ENCODE measurements at regions of chr5 and their contacts with region 1.

Region 1: GRCh38 chr5:87260604-87261192 is 7.0 kb upstream of the RASA1 start:
- DNase-seq: no peak
- H3K4me3 ChIP-seq: no peak overlapping the region
- H3K27ac ChIP-seq: no peak overlapping the region
- H3K4me1 ChIP-seq: no peaks in the 10 kb centered on the region
- H3K27me3 ChIP-seq: no peaks in the 10 kb centered on the region
- CTCF ChIP-seq: no peak

Region 2: DNA sequence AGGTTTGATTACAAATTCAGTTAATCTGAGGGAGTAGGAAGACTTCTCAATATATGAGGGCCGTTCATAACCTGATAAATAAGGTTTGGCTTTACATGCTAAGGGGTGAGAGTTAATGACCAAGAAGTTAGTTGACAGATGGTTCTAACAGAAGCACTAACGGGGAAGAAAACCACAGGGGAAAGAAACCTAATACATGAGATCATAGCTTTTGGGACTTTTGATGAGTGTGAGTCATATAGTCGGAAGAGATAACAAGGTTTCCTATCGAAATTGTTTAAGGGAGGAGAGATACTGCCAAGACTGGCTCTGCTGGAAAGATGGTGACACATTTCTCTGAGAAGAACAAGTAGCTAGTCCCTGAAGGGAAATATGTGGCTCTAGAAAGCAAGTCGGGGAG is 502.9 kb before region 1 on chr5:
- CTCF ChIA-PET with region 1: no interaction called
- POLR2A ChIA-PET with region 1: no interaction called
- intact Hi-C with region 1: no loop called
- DNase-seq: no peak
- H3K4me3 ChIP-seq: no peak overlapping the region
- H3K27ac ChIP-seq: no peak overlapping the region
- H3K4me1 ChIP-seq: no peaks in the 10 kb centered on the region
- H3K27me3 ChIP-seq: no peaks in the 10 kb centered on the region
- CTCF ChIP-seq: no peak

Region 3: DNA sequence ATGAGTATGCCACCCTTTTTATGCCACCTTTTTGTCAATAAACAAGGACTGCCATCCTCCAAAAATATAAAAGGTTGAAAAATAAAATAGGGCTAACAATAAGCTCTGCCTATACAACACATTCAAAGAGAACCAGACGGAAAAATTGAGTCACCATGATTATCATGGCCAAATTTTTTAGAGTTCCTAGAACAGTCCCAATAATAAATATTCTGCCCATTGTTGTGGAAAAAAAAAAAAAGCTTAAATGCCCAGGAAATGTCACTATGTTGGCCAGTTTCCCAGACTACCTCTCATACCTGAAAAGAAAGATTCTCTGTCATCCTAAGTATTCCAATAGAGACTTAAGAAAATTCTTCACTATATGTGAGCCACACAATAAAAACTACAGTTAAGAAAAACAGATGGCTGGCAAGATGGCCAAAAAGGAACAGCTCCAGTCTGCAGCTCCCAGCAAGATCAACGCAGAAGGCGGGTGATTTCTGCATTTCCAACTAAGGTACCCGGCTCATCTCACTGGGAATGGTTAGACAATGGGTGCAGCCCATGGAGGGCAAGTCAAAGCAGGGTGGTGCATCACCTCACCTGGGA is 858.9 kb after region 1 on chr5:
- CTCF ChIA-PET with region 1: no interaction called
- POLR2A ChIA-PET with region 1: interaction called, 27 read pairs
- intact Hi-C with region 1: no loop called
- DNase-seq: no peak
- H3K4me3 ChIP-seq: no peak overlapping the region
- H3K27ac ChIP-seq: no peak overlapping the region
- H3K4me1 ChIP-seq: peaks cover 11% of the 10 kb centered on the region
- H3K27me3 ChIP-seq: no peaks in the 10 kb centered on the region
- CTCF ChIP-seq: no peak